CD4-positive, alpha-beta T cell (primary cell): ENCODE measurements at regions of chr15 and their contacts with region 1.

Region 1: GRCh38 chr15:98647774-98648653 is at the start of gene IGF1R:
- DNase-seq: peak; percentile 79 to 95 (median 86)
- ATAC-seq: peak; percentile 65
- H3K4me3 ChIP-seq: peak within 1 kb of the TSS; percentile 81
- H3K4me3 Mint-ChIP-seq: peak within 1 kb of the TSS; percentile 95
- H3K27ac ChIP-seq: peak within 1 kb of the TSS in 1 of 2 donors; percentile 83
- H3K27ac Mint-ChIP-seq: peak within 1 kb of the TSS; percentile 91
- H3K4me1 ChIP-seq: peaks cover 33% of the 10 kb centered on the region
- H3K4me1 Mint-ChIP-seq: peaks cover 33% of the 10 kb centered on the region
- H3K27me3 ChIP-seq: peaks cover 16 to 17% of the 10 kb centered on the region in 2 experiments
- H3K27me3 Mint-ChIP-seq: peaks cover 27% of the 10 kb centered on the region
- CTCF ChIP-seq: peak; percentile 17
- total RNA-seq, gene IGF1R: 39.2 to 40.3 TPM

Region 2: DNA sequence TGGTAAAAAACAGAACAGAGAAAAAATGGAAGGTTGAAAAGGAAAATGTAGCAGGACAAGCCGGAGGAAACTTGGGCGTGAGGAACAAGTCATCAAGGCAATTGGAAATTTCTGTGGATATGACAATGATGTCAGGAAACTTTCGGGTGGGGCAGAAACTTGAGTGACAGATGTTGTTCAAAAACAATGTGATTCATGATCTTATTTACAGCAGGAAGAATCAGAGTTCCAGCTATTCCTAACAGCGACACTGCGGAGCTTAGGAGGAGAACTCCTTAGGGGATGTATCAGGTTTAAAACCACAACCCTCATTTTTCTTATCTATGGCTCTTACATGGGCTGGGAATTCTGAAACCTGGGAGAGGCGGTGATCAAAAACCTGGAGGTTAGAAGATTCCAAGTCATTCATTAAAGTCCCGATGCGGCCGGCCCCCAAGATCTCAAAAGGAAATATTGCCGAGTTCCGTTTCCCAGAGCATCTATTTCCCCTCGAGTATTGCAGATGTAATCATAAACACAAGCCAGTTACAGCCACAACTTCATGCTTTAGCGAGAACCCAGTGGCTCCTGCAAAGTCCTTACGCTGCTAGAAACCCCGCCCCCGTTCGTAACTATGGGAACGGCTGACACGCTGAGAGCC is 688.2 kb before region 1 on chr15:
- CTCF ChIA-PET with region 1: no interaction called
- POLR2A ChIA-PET with region 1: no interaction called
- intact Hi-C with region 1: loop called in 1 of 2 experiments (anchors 10 kb)
- DNase-seq: peak in 3 of 14 experiments; percentile 10 to 98 (median 16)
- ATAC-seq: no peak
- H3K4me3 ChIP-seq: peak overlapping the region; percentile 44
- H3K4me3 Mint-ChIP-seq: peak overlapping the region; percentile 93
- H3K27ac ChIP-seq: peak overlapping the region in 1 of 2 donors; percentile 27
- H3K27ac Mint-ChIP-seq: peak overlapping the region; percentile 80
- H3K4me1 ChIP-seq: peaks cover 14% of the 10 kb centered on the region
- H3K4me1 Mint-ChIP-seq: peaks cover 26% of the 10 kb centered on the region
- H3K27me3 ChIP-seq: no peaks in the 10 kb centered on the region
- H3K27me3 Mint-ChIP-seq: no peaks in the 10 kb centered on the region
- CTCF ChIP-seq: no peak

Region 3: DNA sequence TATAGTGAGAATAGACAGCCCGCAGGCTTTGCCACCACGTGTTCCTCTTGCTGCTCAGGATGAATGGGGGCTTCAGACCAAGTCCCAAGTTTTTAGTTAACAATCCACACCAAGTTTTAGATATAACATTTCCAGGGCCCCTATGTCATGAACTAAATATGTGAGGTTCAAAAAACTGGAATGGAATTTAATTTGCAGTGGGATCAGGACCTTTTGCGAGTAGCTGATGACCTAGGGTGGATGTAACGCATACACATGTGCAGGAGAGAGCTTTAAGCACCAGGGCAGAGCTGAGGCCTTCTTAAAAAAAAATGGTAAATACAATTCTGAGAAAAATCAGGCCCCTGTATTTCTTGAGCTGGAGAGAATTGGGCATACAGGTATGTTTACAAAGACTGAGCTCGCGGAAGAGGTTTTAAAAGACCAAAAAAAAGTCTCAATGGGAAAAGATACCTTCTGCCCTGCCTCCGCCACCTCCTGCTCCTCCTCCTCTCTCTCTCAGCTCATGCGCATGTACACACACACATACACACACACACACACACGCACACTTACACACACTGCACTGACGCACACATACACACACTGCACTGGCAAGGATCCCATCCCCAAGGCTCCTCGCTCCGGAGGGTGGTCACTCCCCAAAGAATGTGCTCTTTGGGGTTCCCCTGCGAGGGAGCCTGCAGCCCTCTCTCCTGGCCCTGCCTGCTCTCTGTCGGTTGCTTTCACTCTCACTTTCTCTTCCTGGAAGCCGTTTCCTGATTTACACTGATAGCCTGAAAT is 47.9 kb before region 1 on chr15:
- CTCF ChIA-PET with region 1: no interaction called
- POLR2A ChIA-PET with region 1: interaction called, 49 read pairs
- intact Hi-C with region 1: loop called in 1 of 2 experiments (anchors 5 kb)
- DNase-seq: peak in 13 of 14 experiments; percentile 10 to 58 (median 25)
- ATAC-seq: peak; percentile 85
- H3K4me3 ChIP-seq: peak overlapping the region; percentile 49
- H3K4me3 Mint-ChIP-seq: peak overlapping the region; percentile 88
- H3K27ac ChIP-seq: peak overlapping the region in 1 of 2 donors; percentile 35
- H3K27ac Mint-ChIP-seq: peak overlapping the region; percentile 84
- H3K4me1 ChIP-seq: peaks cover 11% of the 10 kb centered on the region
- H3K4me1 Mint-ChIP-seq: peaks cover 22% of the 10 kb centered on the region
- H3K27me3 ChIP-seq: no peaks in the 10 kb centered on the region
- H3K27me3 Mint-ChIP-seq: peaks cover 4% of the 10 kb centered on the region
- CTCF ChIP-seq: no peak

Region 4: DNA sequence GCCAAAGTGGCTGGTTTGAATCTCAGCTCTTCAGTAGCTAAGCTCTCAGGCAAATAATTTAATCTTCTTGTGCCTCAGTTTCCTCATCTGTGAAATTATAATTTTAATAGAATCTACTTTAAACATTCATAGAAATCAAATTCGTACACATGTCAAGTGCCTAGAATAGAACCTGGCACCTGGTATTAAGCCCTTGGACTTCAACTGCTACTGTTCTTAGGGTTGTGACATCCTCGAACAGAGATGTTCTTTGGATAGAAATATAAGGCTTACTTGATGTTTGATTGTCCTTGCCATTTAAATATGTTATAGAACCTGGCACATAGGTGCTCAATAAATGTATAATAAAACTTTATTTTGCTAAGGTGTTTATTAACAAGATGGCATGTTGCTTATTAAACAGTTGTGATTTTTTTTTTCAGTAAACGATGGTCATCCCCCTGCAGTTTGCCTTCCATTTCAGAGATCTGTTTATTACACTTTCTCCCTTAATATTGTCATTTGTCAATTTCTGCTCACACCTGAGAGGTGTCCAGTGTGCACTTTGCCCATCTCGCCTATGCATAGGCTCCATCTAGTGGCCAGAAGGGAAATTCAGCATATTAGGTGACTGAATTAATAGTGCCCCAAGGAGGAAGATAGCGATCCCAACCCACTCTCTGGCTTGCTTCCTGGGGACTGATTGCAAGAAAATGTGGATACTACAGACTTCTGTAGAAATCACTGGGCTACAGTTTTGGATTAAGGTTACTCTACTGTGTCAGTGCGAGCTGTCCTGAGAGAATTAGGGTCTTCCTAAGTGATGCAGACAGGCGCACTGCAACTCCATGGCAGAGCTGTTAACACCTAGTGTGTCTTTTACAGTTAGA is 11.1 kb after region 1 on chr15:
- CTCF ChIA-PET with region 1: interaction called, 5 read pairs
- POLR2A ChIA-PET with region 1: interaction called, 16 read pairs
- intact Hi-C with region 1: loop called in 1 of 2 experiments (anchors 1 kb)
- DNase-seq: peak in 7 of 14 experiments; percentile 10 to 73 (median 52)
- ATAC-seq: peak; percentile 81
- H3K4me3 ChIP-seq: no peak overlapping the region
- H3K4me3 Mint-ChIP-seq: no peak overlapping the region
- H3K27ac ChIP-seq: no peak overlapping the region
- H3K27ac Mint-ChIP-seq: no peak overlapping the region
- H3K4me1 ChIP-seq: peaks cover 9% of the 10 kb centered on the region
- H3K4me1 Mint-ChIP-seq: peaks cover 56% of the 10 kb centered on the region
- H3K27me3 ChIP-seq: no peaks in the 10 kb centered on the region
- H3K27me3 Mint-ChIP-seq: no peaks in the 10 kb centered on the region
- CTCF ChIP-seq: peak; percentile 95

Region 5: DNA sequence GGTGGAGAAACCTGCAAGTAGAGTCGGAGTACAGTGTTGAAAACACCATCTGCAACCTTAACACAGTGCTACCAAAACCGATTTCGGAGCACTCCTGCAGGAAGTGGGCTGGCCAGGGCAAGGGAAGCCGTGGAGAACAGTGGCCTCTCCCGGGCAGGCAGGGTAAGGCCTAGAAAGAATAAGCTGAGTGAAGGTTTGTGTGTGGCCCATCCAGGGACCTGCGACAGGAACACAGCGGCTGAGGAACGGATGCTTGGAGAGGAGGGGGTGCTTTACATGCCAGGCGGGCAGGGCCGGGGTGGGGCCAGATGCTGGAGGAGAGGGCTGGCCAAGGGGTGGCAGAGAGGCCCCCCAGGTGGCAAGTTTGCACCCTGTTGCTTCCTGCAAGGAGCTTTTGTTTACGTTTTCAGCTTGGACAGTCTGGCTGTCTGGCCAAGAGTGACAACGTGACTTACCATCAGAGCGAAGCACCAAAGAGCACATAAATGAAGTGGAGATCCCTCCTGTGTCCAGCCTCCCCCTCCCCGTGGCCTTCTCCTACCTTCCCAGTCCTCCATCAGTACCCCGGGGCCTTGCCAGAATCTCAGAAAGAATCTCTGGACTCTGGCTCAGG is 203.1 kb after region 1 on chr15:
- CTCF ChIA-PET with region 1: interaction called, 6 read pairs
- POLR2A ChIA-PET with region 1: interaction called, 12 read pairs
- intact Hi-C with region 1: loop called (anchors 1 kb)
- DNase-seq: peak; percentile 58 to 84 (median 67)
- ATAC-seq: peak; percentile 73
- H3K4me3 ChIP-seq: peak overlapping the region; percentile 87
- H3K4me3 Mint-ChIP-seq: peak overlapping the region; percentile 93
- H3K27ac ChIP-seq: peak overlapping the region; percentile 7 to 53
- H3K27ac Mint-ChIP-seq: peak overlapping the region; percentile 89
- H3K4me1 ChIP-seq: peaks cover 39% of the 10 kb centered on the region
- H3K4me1 Mint-ChIP-seq: peaks cover 77% of the 10 kb centered on the region
- H3K27me3 ChIP-seq: no peaks in the 10 kb centered on the region
- H3K27me3 Mint-ChIP-seq: no peaks in the 10 kb centered on the region
- CTCF ChIP-seq: peak; percentile 61

Region 6: DNA sequence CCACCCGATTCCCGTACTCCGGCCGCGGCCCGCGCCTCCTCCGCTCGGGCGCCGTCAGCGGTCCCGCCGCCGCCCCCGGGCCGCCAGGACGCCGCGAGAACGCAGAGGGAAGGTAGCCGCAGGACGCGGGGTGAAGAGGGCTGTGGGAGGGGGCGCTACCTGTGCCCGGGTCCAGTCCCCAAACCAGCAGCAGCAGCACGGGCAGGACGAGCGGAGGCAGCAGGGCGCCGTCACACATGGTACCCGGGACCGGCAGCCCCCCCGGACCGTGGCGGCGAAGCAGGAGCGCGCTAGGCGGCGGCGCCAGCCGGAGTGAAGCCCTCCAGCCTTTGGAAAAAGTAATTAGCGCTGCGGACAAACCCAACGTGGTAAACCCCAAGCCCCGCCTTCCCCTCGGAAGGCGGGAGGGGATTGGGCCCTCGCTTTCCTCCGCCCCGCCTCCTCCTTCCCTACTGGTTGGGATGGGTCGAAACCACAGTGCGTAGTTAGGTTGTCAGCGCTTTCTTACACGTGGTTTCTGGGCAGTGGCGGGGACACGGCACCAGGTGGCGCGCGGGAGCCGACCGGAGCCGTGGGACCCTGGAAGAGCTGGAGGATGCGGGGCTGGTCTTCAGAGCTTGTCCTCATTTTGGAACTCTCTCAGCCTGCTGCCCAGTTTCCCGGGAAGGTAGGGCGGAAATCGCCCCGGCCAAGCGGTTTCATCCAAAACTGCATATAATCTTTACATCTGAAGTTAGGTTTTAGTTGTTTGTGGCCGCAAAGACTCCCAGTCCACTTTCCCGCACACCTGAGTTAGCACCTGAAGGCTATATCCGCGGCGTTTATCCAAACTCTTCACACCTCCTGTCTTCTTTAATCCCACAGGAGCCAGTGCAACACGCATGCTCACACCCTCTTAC is 1693.9 kb after region 1 on chr15 and contains the start of gene ADAMTS17:
- CTCF ChIA-PET with region 1: no interaction called
- POLR2A ChIA-PET with region 1: no interaction called
- intact Hi-C with region 1: loop called in 1 of 2 experiments (anchors 5 kb)
- DNase-seq: peak; percentile 89 to 98 (median 94)
- ATAC-seq: peak; percentile 96
- H3K4me3 ChIP-seq: peak within 1 kb of the TSS; percentile 58
- H3K4me3 Mint-ChIP-seq: peak within 1 kb of the TSS; percentile 88
- H3K27ac ChIP-seq: no peak within 1 kb of the TSS
- H3K27ac Mint-ChIP-seq: no peak within 1 kb of the TSS
- H3K4me1 ChIP-seq: peaks cover 27% of the 10 kb centered on the region
- H3K4me1 Mint-ChIP-seq: peaks cover 14% of the 10 kb centered on the region
- H3K27me3 ChIP-seq: no peaks in the 10 kb centered on the region
- H3K27me3 Mint-ChIP-seq: no peaks in the 10 kb centered on the region
- CTCF ChIP-seq: peak; percentile 92
- total RNA-seq, gene ADAMTS17: 9.9 to 13.2 TPM